ENCODE measurements at regions of chr17 and their contacts with region 1.

Region 1: GRCh38 chr17:40490289-40490853 is 11.1 kb downstream of the TNS4 start:
- DNase-seq: peak; percentile 81
- ATAC-seq: peak; percentile 47
- H3K4me3 ChIP-seq: no peak overlapping the region
- H3K27ac ChIP-seq: peak overlapping the region; percentile 49
- H3K4me1 ChIP-seq: peaks cover 42% of the 10 kb centered on the region
- H3K27me3 ChIP-seq: no peaks in the 10 kb centered on the region
- CTCF ChIP-seq: no peak
- POLR2A ChIP-seq: no peak
- RAD21 ChIP-seq: peak; percentile 13; the same call in 1 of the 2 replicates

Region 2: DNA sequence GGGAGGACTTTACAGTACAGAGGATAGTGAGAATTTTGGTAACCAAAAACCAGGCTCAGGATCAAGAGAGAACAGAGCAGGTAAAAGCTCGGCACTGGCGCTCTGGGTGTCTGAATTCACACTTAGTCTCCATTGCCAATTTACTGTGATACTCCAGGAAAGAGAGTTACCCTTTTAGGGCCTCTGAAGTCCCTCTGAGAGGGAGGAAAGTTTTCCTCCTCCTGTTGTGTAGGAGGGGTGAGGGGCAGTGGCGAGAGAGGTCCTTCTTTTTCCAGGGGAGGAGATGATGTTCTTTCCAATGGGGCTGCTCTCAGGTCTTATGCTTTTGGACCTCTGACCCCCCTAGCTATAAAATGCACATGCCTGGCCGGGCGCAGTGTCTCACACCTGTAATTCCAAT is 16.4 kb after region 1 on chr17:
- CTCF ChIA-PET with region 1: no interaction called
- POLR2A ChIA-PET with region 1: no interaction called
- dilution Hi-C with region 1: no loop called
- in situ Hi-C with region 1: no loop called
- intact Hi-C with region 1: no loop called
- DNase-seq: no peak
- ATAC-seq: no peak
- H3K4me3 ChIP-seq: no peak overlapping the region
- H3K27ac ChIP-seq: no peak overlapping the region
- H3K4me1 ChIP-seq: peaks cover 14% of the 10 kb centered on the region
- H3K27me3 ChIP-seq: no peaks in the 10 kb centered on the region
- CTCF ChIP-seq: no peak
- POLR2A ChIP-seq: no peak
- RAD21 ChIP-seq: no peak

Region 3: GRCh38 chr17:40520991-40521453 is 30.7 kb after region 1 on chr17:
- CTCF ChIA-PET with region 1: no interaction called
- POLR2A ChIA-PET with region 1: no interaction called
- dilution Hi-C with region 1: no loop called
- in situ Hi-C with region 1: no loop called
- intact Hi-C with region 1: loop called (anchors 1 kb)
- DNase-seq: no peak
- ATAC-seq: no peak
- H3K4me3 ChIP-seq: no peak overlapping the region
- H3K27ac ChIP-seq: peak overlapping the region; percentile 60
- H3K4me1 ChIP-seq: peaks cover 27% of the 10 kb centered on the region
- H3K27me3 ChIP-seq: no peaks in the 10 kb centered on the region
- CTCF ChIP-seq: no peak
- POLR2A ChIP-seq: no peak
- RAD21 ChIP-seq: no peak

Region 4: GRCh38 chr17:40588552-40588951 is 98.2 kb after region 1 on chr17:
- CTCF ChIA-PET with region 1: no interaction called
- POLR2A ChIA-PET with region 1: no interaction called
- dilution Hi-C with region 1: no loop called
- in situ Hi-C with region 1: no loop called
- intact Hi-C with region 1: no loop called
- DNase-seq: no peak
- ATAC-seq: no peak
- H3K4me3 ChIP-seq: no peak overlapping the region
- H3K27ac ChIP-seq: no peak overlapping the region
- H3K4me1 ChIP-seq: no peaks in the 10 kb centered on the region
- H3K27me3 ChIP-seq: peaks cover 18% of the 10 kb centered on the region
- CTCF ChIP-seq: no peak
- POLR2A ChIP-seq: no peak
- RAD21 ChIP-seq: no peak

Measured in IMR-90 (cell line).